Heart left ventricle (tissue), 16 donors: ENCODE measurements at regions of chr10 and their contacts with region 1.

Region 1: GRCh38 chr10:92240289-92241157 is 50.4 kb downstream of the CPEB3 start:
- DNase-seq: peak in 4 of 5 donors; percentile 59 to 72 (median 68)
- ATAC-seq: peak; percentile 72 to 82 (median 77)
- H3K4me3 ChIP-seq: peak overlapping the region; percentile 49 to 82 (median 75)
- H3K27ac ChIP-seq: peak overlapping the region; percentile 62 to 91 (median 88)
- H3K4me1 ChIP-seq: peaks cover 0 to 58% (median 25%) of the 10 kb centered on the region in 12 donors
- H3K27me3 ChIP-seq: no peaks in the 10 kb centered on the region
- CTCF ChIP-seq: no peak
- POLR2A ChIP-seq: peak in 1 of 2 donors; percentile 54

Region 2: GRCh38 chr10:91797874-91798648 is 442.5 kb before region 1 on chr10 and contains the start of gene TNKS2:
- intact Hi-C with region 1: no loop called
- DNase-seq: peak; percentile 95 to 98 (median 95)
- ATAC-seq: peak; percentile 93 to 98 (median 97)
- H3K4me3 ChIP-seq: peak within 1 kb of the TSS; percentile 76 to 99 (median 92)
- H3K27ac ChIP-seq: peak within 1 kb of the TSS; percentile 82 to 98 (median 97)
- H3K4me1 ChIP-seq: peaks cover 0 to 52% (median 30%) of the 10 kb centered on the region in 12 donors
- H3K27me3 ChIP-seq: no peaks in the 10 kb centered on the region
- CTCF ChIP-seq: peak in 1 of 12 donors; percentile 17
- POLR2A ChIP-seq: peak; percentile 26 to 92
- total RNA-seq, gene TNKS2: 10.3 to 24.7 (median 15.4) TPM

Region 3: GRCh38 chr10:92064506-92064905 is 176.0 kb before region 1 on chr10:
- intact Hi-C with region 1: no loop called
- DNase-seq: no peak
- ATAC-seq: peak in 2 of 4 donors; percentile 9 to 10
- H3K4me3 ChIP-seq: no peak overlapping the region
- H3K27ac ChIP-seq: peak overlapping the region in 1 of 12 donors; percentile 17
- H3K4me1 ChIP-seq: peaks cover 0 to 20% (median 6%) of the 10 kb centered on the region in 12 donors
- H3K27me3 ChIP-seq: no peaks in the 10 kb centered on the region
- CTCF ChIP-seq: no peak
- POLR2A ChIP-seq: no peak

Region 4: DNA sequence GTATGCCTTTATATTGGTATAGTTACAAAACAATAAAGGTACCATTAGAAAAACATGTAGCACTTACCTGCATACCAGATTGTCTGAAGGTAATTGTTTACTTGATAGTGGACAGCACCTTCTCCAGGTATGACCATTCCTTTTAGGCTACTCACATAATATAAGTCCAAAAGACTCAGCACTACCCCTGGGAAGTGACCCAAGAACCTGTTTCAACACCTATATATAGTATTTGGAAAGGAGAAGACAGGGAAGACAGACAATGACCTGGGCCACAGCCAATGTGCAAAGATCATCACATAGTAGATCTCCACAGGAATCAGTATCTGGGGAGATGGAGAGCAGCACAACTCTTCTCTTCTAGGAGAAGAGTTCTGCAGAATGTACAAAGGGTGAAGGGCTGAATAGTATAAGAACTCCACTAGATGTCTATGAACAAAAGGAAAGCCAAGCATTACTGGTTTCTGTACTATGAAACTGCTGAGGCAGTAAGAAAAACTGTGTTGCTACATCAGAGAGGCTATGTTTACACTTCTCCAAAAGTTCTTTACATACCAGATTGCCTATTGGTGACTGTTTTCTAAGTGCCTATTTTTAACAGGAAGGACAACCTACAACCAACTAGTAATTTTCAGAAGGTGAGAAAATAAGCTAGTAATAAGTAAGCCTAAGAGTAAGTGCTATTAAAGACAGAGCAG is 157.8 kb before region 1 on chr10:
- intact Hi-C with region 1: loop called in 6 of 10 experiments (anchors 2 to 10 kb)
- DNase-seq: no peak
- ATAC-seq: no peak
- H3K4me3 ChIP-seq: no peak overlapping the region
- H3K27ac ChIP-seq: no peak overlapping the region
- H3K4me1 ChIP-seq: peaks cover 0 to 33% (median 14%) of the 10 kb centered on the region in 12 donors
- H3K27me3 ChIP-seq: no peaks in the 10 kb centered on the region
- CTCF ChIP-seq: no peak
- POLR2A ChIP-seq: no peak

Region 5: DNA sequence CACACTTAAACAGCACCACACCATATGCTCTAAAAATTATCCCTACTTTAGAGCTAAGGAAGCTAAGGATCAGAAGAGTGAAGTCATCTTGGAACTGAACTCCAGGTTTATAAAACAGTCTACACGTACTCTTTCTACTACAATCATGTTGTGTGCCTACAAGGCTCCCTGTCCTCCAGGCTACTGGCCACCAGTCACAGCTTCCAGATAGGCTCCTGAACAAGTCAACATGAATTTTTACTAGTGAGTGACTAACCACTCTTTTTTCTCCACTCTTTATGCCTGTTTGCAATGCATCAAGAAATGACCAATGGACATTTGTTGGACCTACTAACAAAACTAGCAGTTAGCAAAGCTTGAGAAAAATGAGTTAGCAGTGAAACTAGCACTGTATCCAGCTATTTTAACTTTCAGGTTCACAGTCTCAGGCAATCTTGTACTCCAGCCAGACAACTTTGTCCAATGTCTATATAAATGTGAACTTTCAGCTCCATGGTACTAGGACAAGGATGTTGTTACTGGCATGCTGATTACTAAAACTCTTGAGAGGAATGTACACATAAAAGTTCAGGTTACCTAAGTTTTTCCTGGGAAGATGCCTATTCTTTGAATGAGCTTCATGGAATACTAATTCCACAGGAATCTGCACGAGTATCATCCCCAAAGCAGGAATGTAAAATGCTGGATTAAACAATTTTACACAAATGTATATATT is 137.0 kb before region 1 on chr10:
- intact Hi-C with region 1: loop called in 1 of 10 experiments (anchors 10 kb)
- DNase-seq: no peak
- ATAC-seq: no peak
- H3K4me3 ChIP-seq: no peak overlapping the region
- H3K27ac ChIP-seq: no peak overlapping the region
- H3K4me1 ChIP-seq: peaks cover 9 to 55% (median 39%) of the 10 kb centered on the region in 12 donors
- H3K27me3 ChIP-seq: no peaks in the 10 kb centered on the region
- CTCF ChIP-seq: no peak
- POLR2A ChIP-seq: no peak

Region 6: DNA sequence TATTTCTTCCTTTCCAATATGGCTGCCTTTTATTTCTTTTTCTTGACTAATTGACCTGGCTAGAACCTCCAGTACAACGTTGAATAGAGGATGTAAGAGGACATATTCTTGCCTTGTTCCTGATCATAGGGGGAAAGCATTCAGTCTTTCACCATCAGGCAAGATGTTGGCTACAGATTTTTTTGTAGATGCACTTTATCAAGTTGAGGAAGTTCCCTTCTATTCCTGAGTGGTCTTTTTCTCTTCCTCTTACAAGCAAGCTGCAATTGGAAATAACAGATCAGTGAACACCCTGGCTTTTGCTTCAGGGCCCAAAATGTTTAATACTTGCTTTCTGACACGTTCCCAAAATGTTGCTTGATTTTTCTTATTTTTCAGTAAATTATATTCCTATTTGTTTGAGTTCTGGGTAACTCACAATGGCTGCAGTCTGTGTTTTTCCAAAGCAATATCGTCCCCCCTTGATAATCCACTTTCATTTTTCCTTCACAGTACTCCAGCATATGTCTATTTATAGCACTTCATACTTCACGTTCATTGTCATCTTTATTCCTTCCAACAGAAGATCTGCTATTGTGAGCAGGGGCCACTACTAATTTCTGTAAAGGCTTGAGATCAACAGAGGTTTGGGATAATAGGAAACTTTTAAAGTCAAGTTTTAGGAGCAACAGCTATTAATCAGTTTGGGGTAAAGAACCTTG is 38.6 kb after region 1 on chr10:
- intact Hi-C with region 1: loop called in 2 of 10 experiments (anchors 5 kb)
- DNase-seq: no peak
- ATAC-seq: peak; percentile 69 to 85 (median 74)
- H3K4me3 ChIP-seq: peak overlapping the region in 8 of 12 donors; percentile 11 to 49 (median 24)
- H3K27ac ChIP-seq: peak overlapping the region; percentile 33 to 83 (median 71)
- H3K4me1 ChIP-seq: peaks cover 0 to 29% (median 5%) of the 10 kb centered on the region in 12 donors
- H3K27me3 ChIP-seq: no peaks in the 10 kb centered on the region
- CTCF ChIP-seq: no peak
- POLR2A ChIP-seq: no peak

Region 7: DNA sequence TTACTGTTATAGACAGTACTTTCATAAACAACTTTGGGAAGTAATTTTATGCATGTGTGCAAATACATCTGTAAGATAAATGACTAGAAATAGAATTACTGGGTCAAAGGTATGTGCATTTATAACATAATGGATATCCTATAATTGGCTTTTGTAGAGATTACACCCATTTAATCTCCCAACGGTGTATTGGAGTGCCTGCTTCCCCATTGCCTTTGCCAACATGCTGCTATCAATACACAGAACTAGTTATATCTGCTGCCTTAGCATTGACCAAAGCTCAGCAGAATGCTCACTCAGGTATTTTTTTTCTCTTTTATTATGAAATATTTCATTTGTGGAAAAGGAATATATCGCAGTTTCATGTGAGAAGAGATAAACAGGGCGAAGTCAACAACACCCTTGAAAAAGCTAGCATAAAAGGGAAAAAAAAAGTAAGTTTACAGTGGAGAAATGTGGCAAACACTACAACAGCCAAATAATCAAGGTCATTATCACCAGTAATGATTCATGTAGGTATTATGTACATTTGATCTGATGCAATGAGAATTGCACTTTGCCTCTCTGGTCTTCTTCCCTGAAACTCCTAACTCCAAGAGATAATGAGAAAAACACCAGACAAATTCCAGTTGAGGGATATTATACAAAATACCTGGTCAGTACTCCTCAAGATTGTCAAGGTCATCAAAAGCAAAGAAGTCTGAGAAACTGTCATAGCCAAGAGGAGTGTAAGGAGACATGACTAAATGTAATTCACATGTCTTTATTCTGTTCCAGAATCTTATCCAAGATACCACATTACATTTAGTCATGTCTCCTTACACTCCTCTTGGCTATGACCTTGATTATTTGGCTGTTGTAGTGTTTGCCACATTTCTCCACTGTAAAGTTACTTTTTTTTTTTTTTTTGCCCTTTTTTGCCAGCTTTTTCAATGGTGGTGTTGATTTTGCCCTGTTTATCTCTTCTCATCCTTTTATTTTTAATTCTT is 87.2 kb after region 1 on chr10:
- intact Hi-C with region 1: no loop called
- DNase-seq: no peak
- ATAC-seq: no peak
- H3K4me3 ChIP-seq: no peak overlapping the region
- H3K27ac ChIP-seq: no peak overlapping the region
- H3K4me1 ChIP-seq: peaks cover 0 to 27% (median 11%) of the 10 kb centered on the region in 12 donors
- H3K27me3 ChIP-seq: no peaks in the 10 kb centered on the region
- CTCF ChIP-seq: no peak
- POLR2A ChIP-seq: no peak

Region 8: GRCh38 chr10:92432596-92432995 is 192.1 kb after region 1 on chr10:
- intact Hi-C with region 1: loop called in 1 of 10 experiments (anchors 10 kb)
- DNase-seq: no peak
- ATAC-seq: peak in 1 of 4 donors; percentile 37
- H3K4me3 ChIP-seq: no peak overlapping the region
- H3K27ac ChIP-seq: peak overlapping the region in 11 of 12 donors; percentile 1 to 75 (median 65)
- H3K4me1 ChIP-seq: peaks cover 0 to 33% (median 14%) of the 10 kb centered on the region in 12 donors
- H3K27me3 ChIP-seq: no peaks in the 10 kb centered on the region
- CTCF ChIP-seq: no peak
- POLR2A ChIP-seq: no peak